ENCODE measurements at regions of chr3 and their contacts with region 1.

Region 1: GRCh38 chr3:42701142-42702065 is 1.2 kb downstream of the HHATL start:
- DNase-seq: peak; percentile 85 to 97
- ATAC-seq: peak; percentile 69 to 75 (median 73)
- H3K4me3 ChIP-seq: peak overlapping the region; percentile 67
- H3K27ac ChIP-seq: peak overlapping the region; percentile 100
- H3K4me1 ChIP-seq: peaks cover 58% of the 10 kb centered on the region
- H3K27me3 ChIP-seq: no peaks in the 10 kb centered on the region
- CTCF ChIP-seq: peak; percentile 26

Region 2: GRCh38 chr3:42652611-42653302 is 48.6 kb before region 1 on chr3:
- intact Hi-C with region 1: no loop called
- DNase-seq: peak; percentile 56 to 73
- ATAC-seq: peak; percentile 19 to 31 (median 27)
- H3K4me3 ChIP-seq: peak overlapping the region; percentile 78
- H3K27ac ChIP-seq: peak overlapping the region; percentile 98
- H3K4me1 ChIP-seq: peaks cover 43% of the 10 kb centered on the region
- H3K27me3 ChIP-seq: no peaks in the 10 kb centered on the region
- CTCF ChIP-seq: no peak

Region 3: GRCh38 chr3:42683875-42684598 is 17.4 kb before region 1 on chr3:
- intact Hi-C with region 1: loop called in 1 of 2 experiments (anchors 2 kb)
- DNase-seq: peak; percentile 87 to 91
- ATAC-seq: peak; percentile 72 to 80 (median 78)
- H3K4me3 ChIP-seq: peak overlapping the region; percentile 71
- H3K27ac ChIP-seq: peak overlapping the region; percentile 98
- H3K4me1 ChIP-seq: peaks cover 40% of the 10 kb centered on the region
- H3K27me3 ChIP-seq: no peaks in the 10 kb centered on the region
- CTCF ChIP-seq: no peak

Region 4: GRCh38 chr3:42739401-42740158 is 38.2 kb after region 1 on chr3:
- intact Hi-C with region 1: loop called (anchors 1 to 2 kb)
- DNase-seq: peak; percentile 89 to 98
- ATAC-seq: peak; percentile 92 to 96 (median 96)
- H3K4me3 ChIP-seq: no peak overlapping the region
- H3K27ac ChIP-seq: peak overlapping the region; percentile 95
- H3K4me1 ChIP-seq: peaks cover 34% of the 10 kb centered on the region
- H3K27me3 ChIP-seq: no peaks in the 10 kb centered on the region
- CTCF ChIP-seq: no peak

Region 5: DNA sequence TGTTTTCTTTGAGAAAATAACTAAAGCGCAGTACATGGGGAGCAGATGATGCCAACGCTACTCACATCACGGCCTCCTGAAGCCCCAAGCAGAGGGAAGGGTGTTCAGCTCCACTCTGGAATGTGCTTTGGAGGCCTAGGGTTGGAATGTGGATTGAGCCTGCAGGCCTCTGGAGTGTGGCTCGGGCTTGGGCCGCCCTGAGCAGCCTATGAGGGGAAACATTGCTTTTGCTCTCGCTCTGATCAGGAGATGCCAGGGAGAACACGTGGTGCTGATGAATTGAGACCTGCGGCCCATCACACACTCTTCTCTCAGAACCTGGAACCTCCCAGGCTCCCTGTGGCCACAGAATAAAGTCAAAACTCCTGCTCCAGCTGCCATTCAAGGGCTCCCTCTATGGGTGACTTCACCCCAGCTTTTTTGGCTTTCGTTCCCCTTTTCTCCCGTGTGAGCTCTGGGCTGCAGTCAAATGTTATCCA is 48.4 kb after region 1 on chr3:
- intact Hi-C with region 1: loop called in 1 of 2 experiments (anchors 1 kb)
- DNase-seq: no peak
- ATAC-seq: peak; percentile 53 to 76 (median 67)
- H3K4me3 ChIP-seq: no peak overlapping the region
- H3K27ac ChIP-seq: no peak overlapping the region
- H3K4me1 ChIP-seq: peaks cover 15% of the 10 kb centered on the region
- H3K27me3 ChIP-seq: no peaks in the 10 kb centered on the region
- CTCF ChIP-seq: peak; percentile 40

Measured in psoas muscle (tissue), 8 donors.